ENCODE measurements at regions of chr12 and their contacts with region 1.

Region 1: GRCh38 chr12:59699421-59700152 is 103.8 kb downstream of the SLC16A7 start:
- DNase-seq: no peak
- ATAC-seq: no peak
- H3K4me3 ChIP-seq: no peak overlapping the region
- H3K27ac ChIP-seq: no peak overlapping the region
- H3K4me1 ChIP-seq: no peaks in the 10 kb centered on the region
- H3K27me3 ChIP-seq: no peaks in the 10 kb centered on the region
- CTCF ChIP-seq: no peak

Region 2: DNA sequence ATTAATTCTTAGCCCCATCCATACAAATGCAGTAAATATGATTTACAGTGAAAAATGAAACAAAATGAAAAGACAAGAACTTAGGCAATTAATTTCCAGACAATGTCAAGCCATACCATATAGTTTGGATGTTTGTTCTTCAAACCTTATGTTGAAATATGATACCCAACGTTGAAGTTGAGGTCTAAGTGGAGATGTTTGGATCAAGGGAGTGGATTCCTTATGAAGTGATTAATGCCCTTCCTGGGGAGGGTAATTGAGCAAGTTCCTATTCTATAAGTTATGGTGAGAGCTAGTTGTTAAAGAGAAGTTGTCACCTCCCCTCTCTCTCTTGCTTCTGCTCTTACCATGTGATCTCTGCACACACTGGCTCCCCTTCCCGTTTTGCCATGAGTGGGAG is 336.8 kb after region 1 on chr12:
- CTCF ChIA-PET with region 1: no interaction called
- POLR2A ChIA-PET with region 1: interaction called, 11 read pairs
- in situ Hi-C with region 1: no loop called
- intact Hi-C with region 1: no loop called
- DNase-seq: no peak
- ATAC-seq: no peak
- H3K4me3 ChIP-seq: no peak overlapping the region
- H3K27ac ChIP-seq: no peak overlapping the region
- H3K4me1 ChIP-seq: no peaks in the 10 kb centered on the region
- H3K27me3 ChIP-seq: no peaks in the 10 kb centered on the region
- CTCF ChIP-seq: no peak